PC-3 (cell line): ENCODE measurements at regions of chr2 and their contacts with region 1.

Region 1: GRCh38 chr2:96305091-96305978 is at the start of gene SNRNP200:
- DNase-seq: peak; percentile 89
- ATAC-seq: peak; percentile 98
- H3K4me3 ChIP-seq: peak within 1 kb of the TSS; percentile 91
- H3K27ac ChIP-seq: peak within 1 kb of the TSS; percentile 63
- H3K4me1 ChIP-seq: peaks cover 19% of the 10 kb centered on the region
- H3K27me3 ChIP-seq: no peaks in the 10 kb centered on the region
- CTCF ChIP-seq: no peak
- total RNA-seq, gene SNRNP200: 77.8 and 124 TPM in 2 replicates

Region 2: DNA sequence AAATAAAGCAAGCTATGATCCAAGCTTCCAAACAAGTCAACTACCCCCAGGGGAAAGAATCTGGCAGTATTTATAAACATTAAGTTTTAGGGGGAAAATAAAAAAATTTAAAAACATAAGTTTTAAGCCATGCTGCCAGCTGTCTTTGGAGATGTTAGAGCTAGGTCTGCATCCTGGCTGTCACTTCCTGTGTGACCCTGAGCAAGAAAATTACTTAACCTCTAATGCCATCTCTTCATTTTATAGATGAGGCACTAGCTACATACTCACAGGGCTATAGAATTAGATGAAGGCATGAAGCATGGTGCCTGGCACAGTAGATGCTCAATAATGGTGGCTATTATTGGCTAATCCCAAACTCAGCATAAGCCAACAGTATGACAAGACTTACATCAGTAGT is 124.8 kb before region 1 on chr2:
- CTCF ChIA-PET with region 1: no interaction called
- POLR2A ChIA-PET with region 1: no interaction called
- intact Hi-C with region 1: no loop called
- DNase-seq: no peak
- ATAC-seq: no peak
- H3K4me3 ChIP-seq: no peak overlapping the region
- H3K27ac ChIP-seq: no peak overlapping the region
- H3K4me1 ChIP-seq: no peaks in the 10 kb centered on the region
- H3K27me3 ChIP-seq: no peaks in the 10 kb centered on the region
- CTCF ChIP-seq: no peak

Region 3: DNA sequence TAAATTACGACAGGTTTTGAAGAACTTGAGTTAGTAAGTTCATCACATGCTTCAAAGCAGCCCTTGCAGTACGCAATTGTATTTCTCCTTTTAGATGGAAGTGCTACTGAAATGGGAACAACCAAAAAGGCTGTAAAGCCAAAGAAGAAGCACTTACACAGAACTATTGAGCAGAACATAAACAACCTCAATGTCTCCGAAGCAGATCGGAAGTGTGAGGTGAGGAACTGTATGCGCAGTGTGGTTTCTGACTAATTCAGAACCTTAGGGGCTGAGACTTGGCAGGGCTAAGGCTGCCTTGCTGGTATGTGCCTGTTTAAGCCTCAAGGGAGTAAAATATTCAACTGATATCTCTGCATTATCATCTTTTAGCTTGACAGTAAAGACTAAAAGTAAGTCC is 38.7 kb after region 1 on chr2:
- CTCF ChIA-PET with region 1: no interaction called
- POLR2A ChIA-PET with region 1: no interaction called
- intact Hi-C with region 1: loop called (anchors 1 kb)
- DNase-seq: no peak
- ATAC-seq: no peak
- H3K4me3 ChIP-seq: no peak overlapping the region
- H3K27ac ChIP-seq: no peak overlapping the region
- H3K4me1 ChIP-seq: peaks cover 32% of the 10 kb centered on the region
- H3K27me3 ChIP-seq: no peaks in the 10 kb centered on the region
- CTCF ChIP-seq: no peak

Region 4: GRCh38 chr2:96396095-96396494 is 90.8 kb after region 1 on chr2:
- CTCF ChIA-PET with region 1: interaction called, 14 read pairs
- POLR2A ChIA-PET with region 1: no interaction called
- intact Hi-C with region 1: no loop called
- DNase-seq: no peak
- ATAC-seq: no peak
- H3K4me3 ChIP-seq: no peak overlapping the region
- H3K27ac ChIP-seq: no peak overlapping the region
- H3K4me1 ChIP-seq: no peaks in the 10 kb centered on the region; the same call in 1 of the 2 replicates
- H3K27me3 ChIP-seq: no peaks in the 10 kb centered on the region
- CTCF ChIP-seq: no peak